ENCODE measurements at regions of chr3 and their contacts with region 1.

Region 1: GRCh38 chr3:119676771-119677640 is at the start of gene COX17:
- DNase-seq: peak; percentile 98
- H3K4me3 Mint-ChIP-seq: peak within 1 kb of the TSS; percentile 87
- H3K27ac Mint-ChIP-seq: peak within 1 kb of the TSS; percentile 96
- H3K4me1 Mint-ChIP-seq: peaks cover 33% of the 10 kb centered on the region
- H3K27me3 Mint-ChIP-seq: no peaks in the 10 kb centered on the region
- total RNA-seq, gene COX17: 61.0 and 70.0 TPM in 2 replicates

Region 2: DNA sequence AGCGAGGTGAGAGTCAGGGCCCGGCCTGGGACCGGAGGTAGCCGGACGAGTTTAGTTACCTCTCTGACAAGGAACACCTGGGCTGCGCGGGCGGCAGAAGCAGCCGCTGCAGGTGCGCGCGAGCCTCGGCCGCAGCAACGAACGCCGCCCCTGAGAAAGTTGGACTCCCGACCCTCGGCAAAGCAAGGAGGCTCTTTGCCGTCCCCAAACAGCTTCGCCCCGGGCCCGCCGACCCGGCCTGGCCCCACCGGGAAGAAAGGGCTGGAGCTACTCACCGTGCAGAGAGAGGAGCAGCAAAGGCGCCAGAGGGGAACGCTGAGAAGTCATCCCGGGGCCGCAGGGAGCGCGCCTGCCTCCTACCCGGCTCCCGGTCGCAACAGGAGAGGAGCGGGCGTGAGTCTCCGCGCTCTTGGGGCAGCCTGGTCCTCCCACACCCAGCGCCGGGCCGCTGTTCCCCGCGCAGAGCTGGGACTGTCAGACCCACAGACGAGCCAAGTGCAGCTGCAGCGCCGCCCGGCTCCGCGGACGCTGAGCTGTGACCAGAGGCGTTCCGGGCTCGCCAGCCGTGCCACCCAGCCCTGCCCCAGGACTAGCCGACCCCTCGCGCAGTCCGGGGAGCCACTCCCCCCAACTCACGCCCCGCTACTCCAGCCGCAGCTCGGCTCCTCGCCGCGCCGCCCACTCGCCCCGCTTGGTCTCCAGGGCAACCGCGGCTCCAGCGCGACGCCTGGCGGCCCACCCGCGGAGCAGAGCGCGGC is 642.6 kb before region 1 on chr3 and contains the start of gene IGSF11:
- intact Hi-C with region 1: loop called (anchors 10 kb)
- DNase-seq: peak; percentile 90
- H3K4me3 Mint-ChIP-seq: peak within 1 kb of the TSS; percentile 85
- H3K27ac Mint-ChIP-seq: no peak within 1 kb of the TSS
- H3K4me1 Mint-ChIP-seq: peaks cover 8% of the 10 kb centered on the region
- H3K27me3 Mint-ChIP-seq: peaks cover 58% of the 10 kb centered on the region
- total RNA-seq, gene IGSF11: 0.47 TPM in 1 of 2 replicates, not detected in the other

Region 3: DNA sequence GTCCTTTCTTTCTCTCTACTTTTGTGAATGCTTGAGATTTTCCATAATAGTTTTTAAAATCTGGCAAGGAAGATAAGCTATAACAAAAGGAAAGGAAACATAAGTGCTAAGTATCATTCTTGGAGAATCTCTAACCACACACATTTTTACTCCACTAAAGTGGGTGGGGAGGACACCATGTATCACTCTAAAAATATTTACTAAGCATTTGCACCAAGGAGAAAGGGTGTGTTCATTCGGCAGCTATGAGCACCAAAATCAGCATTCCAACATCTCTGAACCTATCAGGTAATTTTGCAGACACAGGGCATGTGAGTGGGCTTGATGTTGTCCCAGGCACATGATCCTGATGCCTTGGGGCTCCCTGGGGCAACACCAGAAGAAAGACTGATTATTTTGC is 441.9 kb before region 1 on chr3:
- intact Hi-C with region 1: loop called (anchors 5 kb)
- DNase-seq: no peak
- H3K4me3 Mint-ChIP-seq: no peak overlapping the region
- H3K27ac Mint-ChIP-seq: peak overlapping the region; percentile 45
- H3K4me1 Mint-ChIP-seq: peaks cover 48% of the 10 kb centered on the region
- H3K27me3 Mint-ChIP-seq: no peaks in the 10 kb centered on the region

Region 4: DNA sequence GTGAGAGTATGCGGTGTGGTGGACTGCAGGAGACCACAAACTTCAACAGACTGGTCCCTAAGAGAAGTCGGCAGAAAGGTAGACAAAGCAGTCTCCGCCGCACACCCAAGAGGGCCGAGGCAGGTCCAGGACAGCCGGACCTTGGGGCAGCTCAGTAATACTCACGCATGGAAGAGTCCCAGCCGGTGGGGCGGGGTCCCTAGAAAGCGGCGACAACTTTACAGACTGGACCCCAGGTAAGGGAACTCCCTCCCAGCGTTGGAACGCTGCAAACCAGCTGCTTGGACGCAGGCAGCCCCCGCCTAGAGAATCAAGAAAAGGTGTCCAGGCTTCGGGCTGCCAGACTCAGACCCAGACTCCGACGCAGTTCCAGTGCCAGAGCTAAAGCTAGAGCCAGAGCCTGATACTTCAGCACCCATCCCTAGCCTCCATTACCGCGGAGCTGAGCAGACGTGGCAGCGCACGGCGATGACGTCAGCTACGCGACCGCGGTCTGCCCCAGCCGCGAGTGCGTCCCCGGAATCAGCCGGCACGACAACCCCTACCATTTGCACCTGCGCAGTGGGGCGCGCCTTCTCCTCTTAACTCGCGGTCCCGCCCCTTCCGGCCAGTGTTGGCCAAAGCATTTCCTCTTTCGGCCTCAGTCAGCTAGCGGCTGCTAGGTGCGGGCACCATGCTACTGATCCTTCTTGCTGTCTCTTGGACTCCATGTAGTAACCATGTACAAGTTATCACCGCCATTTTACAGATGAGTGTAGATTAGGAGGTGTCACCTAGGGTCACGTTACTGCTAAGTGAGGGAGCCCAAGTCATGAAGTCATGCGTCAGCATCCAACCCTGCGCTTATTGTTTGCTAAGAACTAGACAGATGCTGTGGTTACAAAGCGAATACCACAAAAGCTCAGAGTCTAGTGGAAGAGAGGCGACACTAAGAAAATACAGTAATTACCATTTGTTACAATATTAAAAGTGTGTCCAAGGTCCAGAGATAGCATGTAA is 213.5 kb before region 1 on chr3 and contains the start of gene TMEM39A:
- intact Hi-C with region 1: loop called (anchors 1 kb)
- DNase-seq: peak; percentile 100
- H3K4me3 Mint-ChIP-seq: peak within 1 kb of the TSS; percentile 99
- H3K27ac Mint-ChIP-seq: peak within 1 kb of the TSS; percentile 96
- H3K4me1 Mint-ChIP-seq: peaks cover 30% of the 10 kb centered on the region
- H3K27me3 Mint-ChIP-seq: peaks cover 2% of the 10 kb centered on the region
- total RNA-seq, gene TMEM39A: 44.0 and 52.2 TPM in 2 replicates

Region 5: DNA sequence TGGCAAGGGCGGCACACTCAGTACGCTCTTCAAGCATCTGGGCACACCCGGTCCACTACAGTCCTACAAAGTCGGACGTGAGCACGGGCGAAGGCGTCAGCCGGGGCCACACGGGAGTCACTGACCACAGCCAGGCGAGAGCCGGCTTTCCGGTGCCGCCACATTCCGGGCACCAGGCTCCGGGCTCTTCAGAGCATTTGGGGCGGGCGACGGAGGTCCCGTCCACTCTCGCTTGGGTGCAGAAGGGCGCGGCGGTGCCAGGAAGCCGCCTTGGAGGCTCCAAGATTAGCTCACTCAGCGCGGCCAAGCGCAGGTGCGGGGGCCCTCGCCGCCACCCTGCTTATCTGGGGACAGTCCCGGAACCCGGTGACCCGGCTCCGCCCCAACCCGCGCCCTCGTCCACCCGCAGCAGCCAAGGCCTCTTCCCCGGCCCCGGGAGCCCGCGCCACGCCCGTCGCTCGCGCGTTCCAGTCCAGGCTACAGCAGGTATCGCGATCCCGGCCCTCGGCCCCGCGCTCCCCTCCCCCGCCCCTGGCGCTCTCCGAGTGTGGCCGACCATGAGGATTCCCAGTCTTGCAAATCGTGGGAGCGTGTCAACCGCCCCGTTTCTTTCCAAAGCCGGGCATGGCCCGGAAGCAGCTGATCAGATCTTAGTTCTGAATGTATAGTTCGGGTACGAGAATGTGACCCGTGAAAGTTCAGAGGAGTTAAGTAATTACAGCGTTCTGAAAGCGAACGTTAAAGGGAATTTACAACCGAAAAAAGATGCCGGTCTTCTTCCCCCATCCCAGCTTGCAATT is 97.4 kb before region 1 on chr3 and contains the start of gene ADPRH:
- intact Hi-C with region 1: loop called (anchors 5 kb)
- DNase-seq: peak; percentile 86
- H3K4me3 Mint-ChIP-seq: peak within 1 kb of the TSS; percentile 85
- H3K27ac Mint-ChIP-seq: peak within 1 kb of the TSS; percentile 93
- H3K4me1 Mint-ChIP-seq: peaks cover 25% of the 10 kb centered on the region
- H3K27me3 Mint-ChIP-seq: no peaks in the 10 kb centered on the region
- total RNA-seq, gene ADPRH: 3.6 and 4.2 TPM in 2 replicates

Region 6: DNA sequence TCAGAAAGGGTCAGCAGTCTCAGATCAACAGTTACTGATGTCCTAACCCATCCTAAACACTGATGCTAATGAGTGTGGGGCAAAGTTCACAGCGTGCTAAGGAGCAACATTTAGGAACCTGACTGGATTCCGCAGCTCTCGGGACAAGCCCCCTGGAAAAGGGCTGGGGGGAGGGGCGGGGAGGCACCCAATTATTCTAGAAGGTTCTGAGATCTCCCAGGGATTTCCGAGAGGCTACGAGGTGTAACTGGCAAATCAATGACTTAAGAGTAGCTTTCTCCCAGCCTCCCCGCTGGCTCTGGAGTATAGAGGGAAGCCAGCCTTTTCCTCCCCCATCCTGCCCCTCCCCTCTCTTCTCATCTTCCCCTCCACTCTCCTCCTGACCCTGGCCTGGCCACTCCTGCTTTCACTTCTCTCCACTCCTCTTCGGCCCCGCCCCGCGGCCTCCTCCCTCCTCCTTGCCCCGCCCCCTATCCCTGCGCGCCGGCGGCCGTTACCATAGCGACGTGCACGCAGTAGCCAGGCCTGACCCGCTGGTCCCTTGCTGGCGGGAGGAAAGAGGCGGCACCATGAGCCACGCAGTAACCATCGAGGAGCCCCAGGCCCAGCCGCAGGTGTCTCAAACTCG is 25.6 kb after region 1 on chr3 and contains the start of gene CFAP91:
- intact Hi-C with region 1: loop called (anchors 1 kb)
- DNase-seq: peak; percentile 94
- H3K4me3 Mint-ChIP-seq: peak within 1 kb of the TSS; percentile 83
- H3K27ac Mint-ChIP-seq: peak within 1 kb of the TSS; percentile 40
- H3K4me1 Mint-ChIP-seq: peaks cover 29% of the 10 kb centered on the region
- H3K27me3 Mint-ChIP-seq: peaks cover 27% of the 10 kb centered on the region
- total RNA-seq, gene CFAP91: 0.26 TPM in 1 of 2 replicates, not detected in the other